Right lobe of liver (tissue), 6 donors: ENCODE measurements at regions of chr6 and their contacts with region 1.

Region 1: GRCh38 chr6:28355743-28356665 is 6.3 kb downstream of the ZKSCAN3 start:
- DNase-seq: peak; percentile 75 to 84 (median 81)
- ATAC-seq: peak; percentile 92 to 96 (median 94)
- H3K4me3 ChIP-seq: peak overlapping the region; percentile 46 to 70 (median 65)
- H3K27ac ChIP-seq: peak overlapping the region; percentile 75 to 96 (median 83)
- H3K4me1 ChIP-seq: peaks cover 0 to 21% (median 2%) of the 10 kb centered on the region in 4 donors
- H3K27me3 ChIP-seq: no peaks in the 10 kb centered on the region
- CTCF ChIP-seq: peak; percentile 72 to 96 (median 74)
- POLR2A ChIP-seq: peak; percentile 51

Region 2: GRCh38 chr6:28124102-28124970 is 231.7 kb before region 1 on chr6 and contains the start of gene ZSCAN16:
- intact Hi-C with region 1: loop called in 1 of 2 experiments (anchors 10 kb)
- DNase-seq: peak; percentile 87 to 91 (median 90)
- ATAC-seq: peak; percentile 100
- H3K4me3 ChIP-seq: peak within 1 kb of the TSS; percentile 54 to 65 (median 57)
- H3K27ac ChIP-seq: peak within 1 kb of the TSS in 2 of 3 donors; percentile 3 to 14
- H3K4me1 ChIP-seq: peaks cover 0 to 8% (median 3%) of the 10 kb centered on the region in 4 donors
- H3K27me3 ChIP-seq: no peaks in the 10 kb centered on the region
- CTCF ChIP-seq: no peak
- POLR2A ChIP-seq: peak; percentile 48
- total RNA-seq, gene ZSCAN16: 1.5 to 2.0 (median 1.7) TPM

Region 3: DNA sequence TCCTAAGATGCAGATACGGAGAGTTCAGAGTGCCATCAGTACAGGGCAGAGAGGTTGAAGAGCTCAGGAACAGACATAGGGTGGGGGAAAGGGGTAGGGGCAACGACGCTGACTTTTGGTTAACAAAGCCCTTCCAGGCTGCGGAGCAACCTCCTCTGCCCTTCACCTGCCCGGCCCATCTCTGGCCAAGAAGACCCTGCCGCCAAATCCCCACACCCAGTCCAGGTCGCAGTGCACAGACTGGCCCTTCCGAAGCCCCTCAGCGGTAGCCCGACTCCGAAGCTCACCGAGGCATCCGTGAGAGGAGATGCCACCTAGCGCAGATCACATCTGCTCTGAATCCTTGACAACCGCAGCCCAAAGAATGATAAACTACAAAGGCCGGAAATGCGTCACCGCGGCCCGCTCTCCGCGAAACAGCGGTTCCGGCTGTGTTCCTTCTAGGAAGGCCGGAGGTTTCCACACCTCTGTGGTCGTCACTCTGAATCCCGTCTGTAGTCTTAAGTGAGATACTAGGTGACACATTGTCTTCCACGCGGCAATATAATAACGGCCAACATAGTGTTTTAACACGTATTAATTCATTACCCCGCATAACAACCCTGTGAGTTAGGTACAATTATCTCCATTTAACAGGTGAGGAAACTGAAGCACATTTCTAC is 87.2 kb after region 1 on chr6 and contains the start of gene ZSCAN23:
- intact Hi-C with region 1: no loop called
- DNase-seq: peak in 2 of 3 donors; percentile 41 to 65
- ATAC-seq: peak; percentile 49 to 84 (median 62)
- H3K4me3 ChIP-seq: peak within 1 kb of the TSS; percentile 46 to 65 (median 46)
- H3K27ac ChIP-seq: no peak within 1 kb of the TSS
- H3K4me1 ChIP-seq: no peaks in the 10 kb centered on the region
- H3K27me3 ChIP-seq: no peaks in the 10 kb centered on the region
- CTCF ChIP-seq: no peak
- POLR2A ChIP-seq: no peak
- total RNA-seq, gene ZSCAN23: 0.25 to 0.73 (median 0.43) TPM in 5 of 6 experiments, not detected in the other

Region 4: DNA sequence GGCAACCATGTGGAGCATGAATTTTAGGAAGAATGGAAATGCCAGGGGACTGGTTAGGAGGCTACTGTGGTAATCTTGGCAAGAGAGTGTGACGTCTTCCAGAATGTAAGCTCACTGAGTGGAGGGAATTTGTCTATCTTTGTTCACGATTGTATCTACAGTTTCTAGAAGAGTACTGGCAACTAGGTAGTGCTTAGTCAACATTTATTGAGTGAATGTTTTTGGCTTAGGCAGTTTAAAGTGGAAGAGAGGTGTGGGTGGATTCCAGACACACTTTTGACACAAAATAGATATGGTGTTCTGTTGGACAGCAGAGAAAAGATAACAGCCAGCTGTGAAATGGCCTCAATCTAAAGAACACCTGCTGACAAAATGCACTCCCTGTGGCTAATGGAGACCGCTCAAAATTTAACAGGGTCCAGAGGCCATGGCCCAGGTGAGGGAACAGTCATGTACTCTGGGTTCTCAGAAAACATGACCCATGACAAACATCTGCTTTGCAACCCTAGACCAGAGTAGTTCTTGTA is 308.9 kb after region 1 on chr6:
- intact Hi-C with region 1: no loop called
- DNase-seq: no peak
- ATAC-seq: no peak
- H3K4me3 ChIP-seq: no peak overlapping the region
- H3K27ac ChIP-seq: no peak overlapping the region
- H3K4me1 ChIP-seq: no peaks in the 10 kb centered on the region
- H3K27me3 ChIP-seq: no peaks in the 10 kb centered on the region
- CTCF ChIP-seq: no peak
- POLR2A ChIP-seq: no peak

Region 5: GRCh38 chr6:28776269-28777146 is 420.5 kb after region 1 on chr6:
- intact Hi-C with region 1: no loop called
- DNase-seq: no peak
- ATAC-seq: no peak
- H3K4me3 ChIP-seq: no peak overlapping the region
- H3K27ac ChIP-seq: no peak overlapping the region
- H3K4me1 ChIP-seq: no peaks in the 10 kb centered on the region
- H3K27me3 ChIP-seq: peaks cover 7 to 53% of the 10 kb centered on the region in 2 donors
- CTCF ChIP-seq: no peak
- POLR2A ChIP-seq: no peak